Cardiac septum (tissue), 1 donor: ENCODE measurements at regions of chr4 and their contacts with region 1.

Region 1: DNA sequence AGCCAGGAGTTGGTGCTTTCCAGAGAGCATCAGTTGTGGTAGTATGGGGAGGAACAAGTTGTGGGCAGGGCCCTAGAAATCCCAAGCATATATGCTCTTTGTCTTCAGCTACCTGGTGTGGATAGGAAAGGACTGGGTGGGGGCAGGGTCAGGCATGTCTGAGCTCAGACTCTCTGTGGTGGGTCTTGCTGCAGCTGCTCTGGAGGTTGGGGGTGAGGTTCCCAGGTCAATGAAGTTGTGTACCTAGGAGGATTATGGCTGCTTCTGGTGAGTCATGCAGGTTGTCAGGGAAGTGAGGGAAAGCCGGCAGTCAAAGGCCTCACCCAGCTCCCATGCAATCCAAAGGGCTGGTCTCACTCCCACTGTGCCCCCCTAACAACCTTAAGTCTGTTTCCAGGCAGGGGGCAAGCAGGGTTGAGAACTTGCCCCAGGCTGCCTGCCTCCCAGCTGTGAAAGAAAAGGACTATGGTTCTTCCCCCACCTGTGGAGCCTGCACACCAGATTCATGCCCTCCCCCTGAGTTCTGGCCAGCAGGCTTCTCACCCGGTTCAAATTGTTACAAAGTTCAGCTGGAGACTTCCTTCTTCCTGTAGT is 30.4 kb upstream of the QRFPR start:
- DNase-seq: no peak

Region 2: GRCh38 chr4:121277624-121278023 is 133.6 kb before region 1 on chr4:
- intact Hi-C with region 1: loop called (anchors 10 kb)
- DNase-seq: no peak